ENCODE measurements at regions of chr1 and their contacts with region 1.

Region 1: DNA sequence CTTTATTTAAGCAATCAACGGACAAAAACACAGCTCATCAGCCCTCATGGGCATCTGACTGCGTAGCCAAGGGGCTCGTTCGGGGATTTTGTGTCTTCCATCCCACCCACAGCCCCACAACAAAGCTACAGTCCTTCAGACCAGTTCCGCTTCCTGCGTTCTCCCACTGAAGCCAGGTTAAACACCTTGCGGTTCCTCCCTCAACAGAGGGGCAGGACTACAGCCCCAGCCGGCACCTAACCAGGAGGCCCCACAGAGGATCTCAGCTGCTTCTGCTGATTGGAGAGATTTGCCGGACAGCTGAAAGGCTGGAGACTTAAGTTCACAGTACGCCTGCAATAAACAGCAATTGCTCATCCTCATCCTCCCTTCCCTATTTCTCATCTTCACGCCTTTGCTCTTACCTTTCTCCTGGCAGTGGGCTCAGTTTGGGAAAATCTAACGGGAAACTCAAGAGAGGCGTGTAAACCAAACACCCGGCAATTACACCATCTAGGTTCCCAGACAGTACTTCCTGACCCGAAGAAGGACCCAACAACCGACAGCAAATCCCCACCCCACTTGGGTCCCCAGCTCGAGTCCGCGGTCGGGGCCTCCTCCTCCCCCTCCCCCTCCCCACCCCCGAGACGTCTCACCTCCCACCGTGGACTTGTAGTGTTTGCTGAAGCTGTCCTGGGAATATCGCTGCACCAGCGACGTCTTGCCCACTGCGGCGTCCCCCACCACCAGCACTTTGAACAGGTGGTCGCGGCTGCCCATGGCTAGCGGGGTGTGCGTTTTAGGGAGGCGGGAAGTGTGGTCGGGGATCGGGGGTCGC is 876 bp downstream of the RAB29 start:
- DNase-seq: no peak
- H3K4me3 ChIP-seq: peak overlapping the region; percentile 74
- H3K27ac ChIP-seq: no peak overlapping the region
- H3K4me1 ChIP-seq: no peaks in the 10 kb centered on the region
- H3K27me3 ChIP-seq: peaks cover 3% of the 10 kb centered on the region
- CTCF ChIP-seq: no peak

Region 2: DNA sequence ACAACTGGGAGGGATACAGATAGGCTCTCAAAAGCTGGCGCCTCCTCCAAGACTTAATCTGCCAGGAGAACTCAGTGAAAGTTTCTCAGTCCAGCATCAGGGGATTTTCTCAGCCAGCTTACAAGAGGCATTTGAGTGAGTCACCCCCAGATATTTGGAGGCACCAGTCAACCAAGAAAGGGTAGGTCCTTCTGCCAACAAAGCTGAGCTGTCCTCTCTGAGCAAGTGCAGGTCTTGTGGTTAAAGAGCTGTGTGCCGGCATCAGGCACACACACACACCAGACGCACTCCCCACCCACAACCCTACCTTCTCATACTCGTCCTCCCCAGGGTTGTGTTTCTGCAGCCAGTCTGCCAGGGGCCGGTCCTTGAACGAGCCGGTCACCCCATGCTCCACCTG is 1335.8 kb before region 1 on chr1:
- CTCF ChIA-PET with region 1: no interaction called
- POLR2A ChIA-PET with region 1: interaction called, 19 read pairs
- intact Hi-C with region 1: no loop called
- DNase-seq: no peak
- H3K4me3 ChIP-seq: no peak overlapping the region
- H3K27ac ChIP-seq: no peak overlapping the region
- H3K4me1 ChIP-seq: peaks cover 21% of the 10 kb centered on the region
- H3K27me3 ChIP-seq: no peaks in the 10 kb centered on the region
- CTCF ChIP-seq: no peak

Region 3: DNA sequence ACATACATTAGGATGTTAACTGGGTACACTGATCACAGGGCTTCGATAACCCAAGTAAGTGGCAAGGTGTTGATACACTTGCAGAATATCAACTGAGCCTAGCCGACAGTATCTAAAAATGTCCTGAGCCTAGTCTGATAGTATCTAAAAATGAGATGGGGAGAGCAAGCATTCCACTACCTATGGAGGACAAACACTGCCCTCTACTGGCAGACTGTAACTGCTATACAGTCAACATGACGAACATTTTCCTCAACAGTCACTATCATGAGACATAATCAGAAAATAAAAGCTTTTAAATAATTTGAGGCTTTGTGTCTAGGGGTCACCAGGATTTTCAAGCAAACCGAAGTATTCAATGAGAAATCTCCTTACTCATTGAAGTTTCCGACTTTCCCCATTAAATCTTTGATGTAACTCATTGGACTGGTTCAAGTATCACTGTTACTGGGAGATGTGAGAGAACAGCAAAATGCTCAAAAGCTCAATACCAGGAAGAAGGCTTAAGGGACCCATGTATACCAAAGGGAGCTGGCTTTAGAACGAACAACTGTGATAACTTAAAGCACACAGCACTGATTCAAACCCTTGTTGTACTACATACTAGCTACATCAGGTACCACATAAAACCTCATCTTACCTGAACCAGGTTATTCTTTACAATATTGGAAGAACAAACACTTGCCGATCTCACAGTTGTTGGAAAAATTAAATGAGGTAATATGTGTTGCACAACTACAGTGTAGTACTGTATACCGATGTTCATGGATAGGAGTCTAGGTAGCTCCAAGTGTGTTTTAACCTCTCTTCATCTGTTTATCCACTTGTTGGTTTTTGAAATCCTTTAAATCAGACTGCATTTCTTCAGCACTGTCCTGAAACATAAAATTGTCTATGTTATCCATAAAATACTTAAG is 63.0 kb before region 1 on chr1:
- CTCF ChIA-PET with region 1: no interaction called
- POLR2A ChIA-PET with region 1: no interaction called
- intact Hi-C with region 1: no loop called
- DNase-seq: peak; percentile 82
- H3K4me3 ChIP-seq: no peak overlapping the region
- H3K27ac ChIP-seq: no peak overlapping the region
- H3K4me1 ChIP-seq: no peaks in the 10 kb centered on the region
- H3K27me3 ChIP-seq: no peaks in the 10 kb centered on the region
- CTCF ChIP-seq: peak; percentile 94